HEK293 (cell line): ENCODE measurements at regions of chr10 and their contacts with region 1.

Region 1: DNA sequence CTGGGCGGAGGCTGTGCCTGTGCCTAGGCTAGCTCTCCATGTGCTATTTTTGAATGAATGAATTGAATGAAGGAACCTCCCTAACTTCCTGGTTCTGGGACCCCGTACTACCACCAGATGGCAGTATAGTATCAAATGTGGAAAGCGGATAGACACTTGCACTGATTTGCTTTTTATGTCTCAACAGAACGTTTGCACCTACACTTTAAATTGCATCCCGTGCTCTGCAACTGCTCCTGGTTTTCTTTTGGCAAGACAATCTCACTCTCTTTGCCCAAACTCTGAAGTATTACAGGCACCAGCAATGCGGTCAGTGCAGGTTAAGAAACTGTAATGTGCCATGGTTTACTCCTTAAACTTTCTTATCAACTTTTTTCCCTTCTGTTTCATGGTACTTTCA is 6.5 kb downstream of the FZD8 start:
- H3K4me3 ChIP-seq: no peak overlapping the region
- H3K27ac ChIP-seq: no peak overlapping the region
- H3K4me1 ChIP-seq: peaks cover 3% of the 10 kb centered on the region
- CTCF ChIP-seq: peak; percentile 52

Region 2: DNA sequence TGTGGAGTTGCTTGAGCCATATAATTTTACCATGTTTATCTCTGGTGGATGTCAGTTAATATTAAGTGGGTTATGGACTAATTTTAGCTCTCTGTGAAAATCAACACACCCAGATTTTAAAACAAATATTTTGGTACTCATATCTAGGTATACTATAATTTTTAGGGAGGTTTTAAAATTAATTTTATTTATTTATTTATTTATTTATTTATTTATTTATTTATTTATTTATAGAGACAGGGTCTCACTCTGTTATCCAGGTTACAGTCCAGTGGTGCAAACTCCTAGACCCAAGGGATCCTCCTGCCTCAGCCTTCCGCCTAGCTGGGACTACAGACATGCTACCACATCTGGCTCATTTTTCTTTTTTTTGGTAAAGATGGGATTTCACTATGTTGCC is 516.2 kb before region 1 on chr10:
- CTCF ChIA-PET with region 1: interaction called, 13 read pairs
- POLR2A ChIA-PET with region 1: no interaction called
- H3K4me3 ChIP-seq: no peak overlapping the region
- H3K27ac ChIP-seq: no peak overlapping the region
- H3K4me1 ChIP-seq: no peaks in the 10 kb centered on the region
- CTCF ChIP-seq: no peak

Region 3: DNA sequence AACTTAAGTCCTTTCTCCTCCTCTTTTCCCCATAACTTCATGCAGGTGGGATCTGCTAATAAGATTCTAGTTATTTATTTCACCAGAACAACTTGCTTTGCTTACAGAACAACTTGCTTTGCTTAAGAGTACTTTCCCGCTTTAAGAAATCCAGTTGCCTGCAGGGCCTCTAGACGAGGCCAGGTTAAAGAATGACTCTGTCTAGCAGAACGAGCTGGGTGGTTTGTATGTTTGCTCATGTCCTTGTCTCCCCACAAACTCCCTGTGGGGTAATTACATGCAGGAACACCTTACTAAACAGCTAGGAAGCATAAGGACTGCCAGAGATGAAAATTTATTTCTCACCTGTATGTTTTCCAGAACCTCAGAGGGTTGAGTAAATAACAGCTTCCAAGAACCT is 15.3 kb after region 1 on chr10:
- CTCF ChIA-PET with region 1: no interaction called
- POLR2A ChIA-PET with region 1: no interaction called
- H3K4me3 ChIP-seq: no peak overlapping the region
- H3K27ac ChIP-seq: no peak overlapping the region
- H3K4me1 ChIP-seq: no peaks in the 10 kb centered on the region
- CTCF ChIP-seq: no peak

Region 4: DNA sequence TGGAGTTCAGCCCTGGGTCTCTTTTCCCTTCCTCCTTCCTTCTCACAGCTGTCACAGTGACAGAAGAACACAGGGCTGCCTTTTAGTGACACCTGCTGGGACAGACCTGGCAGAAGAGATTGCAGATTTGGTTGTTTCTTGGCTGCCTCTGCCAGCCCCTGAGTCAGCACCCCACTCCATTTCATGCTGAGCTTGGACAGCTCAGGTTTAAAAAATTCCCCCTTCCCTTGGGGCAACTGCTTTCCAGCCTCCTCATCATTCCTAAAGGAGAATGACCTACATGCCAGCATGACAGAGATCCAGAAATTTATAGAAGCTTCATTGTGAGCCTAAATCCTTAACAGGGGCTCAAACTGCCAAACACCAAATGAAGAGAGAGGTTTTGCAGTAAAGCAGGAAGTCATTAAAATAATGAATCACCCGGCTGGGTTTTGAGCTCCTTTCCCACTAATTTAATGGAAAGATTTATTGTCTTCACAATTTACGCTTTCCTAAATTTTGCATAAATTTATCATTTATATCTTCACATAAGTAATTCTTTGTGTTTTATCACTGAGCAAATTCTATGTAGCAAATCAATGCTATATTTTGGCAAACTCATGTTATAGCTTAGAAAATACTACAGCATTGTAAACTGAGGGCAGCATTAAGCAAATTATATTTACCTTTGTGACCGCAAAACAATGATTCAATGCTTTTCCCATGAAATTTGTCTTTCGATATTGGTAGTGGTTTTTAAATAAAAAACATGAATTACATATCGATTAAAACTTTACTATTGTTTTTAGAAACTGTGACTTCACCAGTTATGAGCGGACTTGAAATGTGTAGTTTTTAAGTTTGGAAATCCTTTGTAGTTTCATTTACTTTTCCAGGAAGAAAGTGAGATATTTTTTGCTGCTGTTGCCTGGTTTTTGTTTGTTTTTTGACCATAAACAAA is 1090.3 kb after region 1 on chr10:
- CTCF ChIA-PET with region 1: interaction called, 10 read pairs
- POLR2A ChIA-PET with region 1: no interaction called
- H3K4me3 ChIP-seq: no peak overlapping the region
- H3K27ac ChIP-seq: peak overlapping the region; percentile 31
- H3K4me1 ChIP-seq: peaks cover 11% of the 10 kb centered on the region
- CTCF ChIP-seq: peak; percentile 54; the same call in 1 of the 2 replicates

Region 5: DNA sequence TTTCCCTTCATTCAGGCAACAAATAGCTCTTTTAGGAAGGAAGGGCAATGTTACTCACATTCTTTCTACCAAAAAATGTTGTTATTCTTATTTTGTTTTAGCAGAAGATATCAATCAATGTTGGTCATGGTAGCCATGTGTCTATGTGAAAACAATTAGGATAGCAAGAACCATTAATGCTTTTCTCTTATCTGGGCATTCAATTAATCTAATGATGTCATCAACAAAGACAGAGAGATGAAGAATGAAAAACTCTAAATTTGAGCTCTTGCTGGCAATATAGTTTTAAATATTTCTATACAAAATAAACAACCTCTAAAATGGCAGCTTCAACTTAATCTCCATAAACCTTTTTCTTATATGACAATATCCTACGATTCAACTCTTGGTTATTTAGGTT is 1136.1 kb after region 1 on chr10:
- CTCF ChIA-PET with region 1: interaction called, 13 read pairs
- POLR2A ChIA-PET with region 1: no interaction called
- H3K4me3 ChIP-seq: no peak overlapping the region
- H3K27ac ChIP-seq: no peak overlapping the region
- H3K4me1 ChIP-seq: no peaks in the 10 kb centered on the region
- CTCF ChIP-seq: no peak

Region 6: DNA sequence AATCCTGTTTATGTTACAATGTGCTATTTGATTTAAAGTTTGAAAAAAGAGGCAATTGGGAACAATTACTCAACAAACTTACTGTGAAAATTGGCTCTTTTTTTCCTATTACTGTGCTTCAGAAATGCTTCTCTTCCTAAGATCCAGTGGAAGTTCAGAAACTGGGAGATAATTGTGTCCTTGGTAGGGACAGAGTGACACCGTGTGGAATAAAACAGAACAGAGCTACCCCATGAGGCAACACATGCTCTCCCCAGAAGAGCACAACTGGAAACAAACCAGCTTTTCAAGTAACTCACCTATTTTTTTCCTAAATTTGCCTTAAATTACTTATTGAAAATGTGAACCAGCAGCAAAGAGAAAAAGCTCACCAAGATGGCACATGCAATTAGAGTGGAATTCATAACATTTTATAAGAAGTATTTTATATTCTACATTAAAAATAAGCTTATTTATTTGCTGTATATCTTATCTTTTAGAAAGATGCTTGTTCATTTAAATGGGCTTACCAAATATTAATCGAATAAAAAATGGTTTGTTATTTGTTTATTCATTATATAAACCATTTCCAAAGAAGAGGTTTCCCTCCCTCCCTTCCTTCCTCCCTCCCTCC is 1143.8 kb after region 1 on chr10:
- CTCF ChIA-PET with region 1: interaction called, 55 read pairs
- POLR2A ChIA-PET with region 1: no interaction called
- H3K4me3 ChIP-seq: no peak overlapping the region
- H3K27ac ChIP-seq: no peak overlapping the region
- H3K4me1 ChIP-seq: no peaks in the 10 kb centered on the region
- CTCF ChIP-seq: peak; percentile 67